ENCODE measurements at regions of chr5 and their contacts with region 1.

Region 1: DNA sequence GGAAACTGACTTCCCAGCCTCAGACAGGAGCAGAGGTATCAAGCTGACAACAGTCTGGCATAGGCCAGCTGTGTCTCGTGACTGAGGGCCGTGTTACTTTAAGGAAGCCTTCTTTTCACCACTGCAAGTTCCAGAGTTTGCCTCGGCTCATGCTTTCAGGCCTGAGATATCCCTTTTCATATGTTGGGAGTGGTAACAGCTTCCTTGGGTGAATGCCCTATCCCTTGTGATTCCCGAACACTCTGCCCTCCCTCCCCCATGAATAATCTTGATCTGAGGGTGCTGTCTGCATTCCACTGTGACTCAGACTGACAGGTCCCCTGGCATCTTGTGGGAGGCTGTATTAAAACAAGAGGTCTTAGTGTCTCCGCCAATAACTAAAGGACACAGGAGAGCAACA is 49.7 kb upstream of the ARL15 start:
- DNase-seq: peak; percentile 67
- ATAC-seq: peak; percentile 94
- H3K4me3 ChIP-seq: no peak overlapping the region
- H3K27ac ChIP-seq: no peak overlapping the region
- H3K4me1 ChIP-seq: peaks cover 15% of the 10 kb centered on the region
- H3K27me3 ChIP-seq: no peaks in the 10 kb centered on the region
- CTCF ChIP-seq: no peak

Region 2: GRCh38 chr5:53892224-53892623 is 467.9 kb before region 1 on chr5:
- CTCF ChIA-PET with region 1: no interaction called
- POLR2A ChIA-PET with region 1: no interaction called
- intact Hi-C with region 1: no loop called
- DNase-seq: no peak
- ATAC-seq: no peak
- H3K4me3 ChIP-seq: no peak overlapping the region
- H3K27ac ChIP-seq: no peak overlapping the region
- H3K4me1 ChIP-seq: no peaks in the 10 kb centered on the region
- H3K27me3 ChIP-seq: no peaks in the 10 kb centered on the region
- CTCF ChIP-seq: no peak

Region 3: DNA sequence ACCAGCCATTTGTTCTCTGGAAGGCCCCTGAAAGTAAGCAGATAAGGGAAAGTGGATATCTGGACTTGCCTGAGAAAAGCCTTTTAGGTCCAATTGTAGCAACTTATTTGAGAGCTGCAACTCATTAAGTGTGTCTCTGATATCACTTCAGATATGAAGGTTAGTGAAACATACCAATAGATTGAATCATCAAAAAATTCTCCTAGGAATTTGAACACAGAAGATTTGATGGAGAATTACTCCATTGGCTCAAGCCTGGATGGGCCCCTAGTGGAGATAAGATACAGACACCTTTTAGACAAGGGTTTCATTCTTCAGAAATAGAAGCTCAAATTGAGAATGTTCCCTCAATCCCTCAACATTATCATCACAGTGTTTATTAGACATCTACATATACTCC is 443.0 kb before region 1 on chr5:
- CTCF ChIA-PET with region 1: no interaction called
- POLR2A ChIA-PET with region 1: no interaction called
- intact Hi-C with region 1: no loop called
- DNase-seq: peak; percentile 25
- ATAC-seq: peak; percentile 38; the same call in 1 of the 2 replicates
- H3K4me3 ChIP-seq: no peak overlapping the region
- H3K27ac ChIP-seq: no peak overlapping the region
- H3K4me1 ChIP-seq: no peaks in the 10 kb centered on the region
- H3K27me3 ChIP-seq: no peaks in the 10 kb centered on the region
- CTCF ChIP-seq: peak; percentile 44

Region 4: DNA sequence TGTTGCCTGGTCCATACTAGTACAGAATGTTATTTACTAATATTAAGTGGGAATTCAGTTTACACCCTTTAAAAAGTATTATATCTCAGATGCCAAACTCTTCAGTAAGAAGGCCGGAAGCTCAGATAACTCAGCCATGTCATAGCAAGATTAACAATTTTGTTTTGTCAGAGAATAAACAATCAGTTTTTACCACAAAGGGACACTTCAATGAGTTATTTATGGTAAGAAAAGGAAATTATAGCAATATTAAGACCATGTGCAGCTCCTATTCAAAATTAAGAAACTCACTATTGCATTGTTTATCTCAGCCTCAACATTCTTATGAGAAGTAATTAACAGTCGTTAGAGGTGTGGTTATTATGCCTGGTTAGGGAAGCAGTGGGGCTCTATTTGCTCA is 36.6 kb before region 1 on chr5:
- CTCF ChIA-PET with region 1: no interaction called
- POLR2A ChIA-PET with region 1: no interaction called
- intact Hi-C with region 1: loop called (anchors 5 kb)
- DNase-seq: no peak
- ATAC-seq: no peak
- H3K4me3 ChIP-seq: no peak overlapping the region
- H3K27ac ChIP-seq: no peak overlapping the region
- H3K4me1 ChIP-seq: peaks cover 8% of the 10 kb centered on the region
- H3K27me3 ChIP-seq: no peaks in the 10 kb centered on the region
- CTCF ChIP-seq: no peak

Region 5: DNA sequence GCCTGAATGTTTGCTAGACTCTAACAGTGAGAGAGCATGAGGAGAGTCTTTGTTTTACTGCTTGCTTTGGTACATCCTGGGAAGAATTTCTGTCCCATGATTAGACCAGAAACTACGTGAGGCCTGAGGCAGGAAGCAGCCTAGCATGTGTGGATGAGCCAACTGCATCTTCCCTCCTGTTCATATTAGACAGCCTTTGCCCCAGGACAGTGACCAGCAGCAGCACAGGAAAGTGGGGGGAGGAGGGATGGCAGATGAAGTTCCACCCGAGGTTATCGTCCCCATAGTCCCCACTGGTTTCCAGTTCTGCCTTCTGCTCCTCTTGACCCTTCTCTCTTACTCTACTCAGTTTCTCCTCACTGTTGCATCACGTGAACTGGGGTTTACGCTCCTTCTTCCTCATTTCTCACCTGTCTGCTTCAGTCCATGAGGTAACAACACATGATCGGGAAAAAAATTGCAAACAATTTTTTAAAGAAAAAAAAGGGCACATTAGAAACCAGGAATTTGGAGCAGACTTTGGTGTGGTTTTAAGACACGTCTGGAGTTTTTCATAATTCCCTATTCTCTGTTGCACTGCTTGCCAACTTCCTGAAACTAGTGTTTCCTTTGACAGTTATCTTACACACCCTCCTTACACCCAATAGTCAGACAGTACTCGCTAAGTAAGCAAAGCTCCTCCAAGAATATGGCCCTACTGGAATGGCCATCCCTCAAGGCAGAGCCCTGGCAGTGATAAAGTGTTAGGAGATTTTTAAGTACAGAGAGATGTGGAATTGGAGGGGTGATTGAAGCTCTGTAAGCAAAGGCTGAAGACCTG is 241.5 kb after region 1 on chr5:
- CTCF ChIA-PET with region 1: no interaction called
- POLR2A ChIA-PET with region 1: no interaction called
- intact Hi-C with region 1: no loop called
- DNase-seq: no peak
- ATAC-seq: no peak
- H3K4me3 ChIP-seq: no peak overlapping the region
- H3K27ac ChIP-seq: no peak overlapping the region
- H3K4me1 ChIP-seq: no peaks in the 10 kb centered on the region
- H3K27me3 ChIP-seq: no peaks in the 10 kb centered on the region
- CTCF ChIP-seq: no peak

Measured in PC-3 (cell line).